ENCODE measurements at regions of chr2 and their contacts with region 1.

Region 1: DNA sequence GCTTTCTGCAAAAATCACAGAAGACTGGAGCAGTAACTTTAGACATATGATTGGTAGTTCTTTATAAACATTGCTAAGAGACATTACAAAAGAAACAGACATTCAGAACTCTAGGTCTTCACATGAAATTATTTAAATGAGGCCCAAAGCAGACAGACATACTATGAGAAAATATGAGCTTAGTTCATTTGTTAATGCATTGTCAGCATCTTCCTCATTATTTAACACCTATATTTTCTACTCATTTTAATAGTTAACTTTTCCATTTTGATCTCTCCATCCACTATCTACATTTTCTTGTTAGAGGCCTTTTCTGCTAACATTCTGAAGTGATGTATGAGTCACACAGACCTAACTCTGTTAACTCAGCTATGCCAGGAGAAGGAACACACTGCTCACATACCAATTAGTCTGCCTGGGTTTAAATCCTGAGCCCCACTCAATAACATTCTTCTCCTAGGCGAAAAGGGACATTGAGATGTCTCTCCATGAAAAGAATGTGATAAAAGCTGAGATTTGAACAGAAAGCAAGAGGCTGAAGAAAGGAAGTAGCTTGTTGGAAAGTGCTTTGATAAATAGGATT is 400.3 kb upstream of the PKDCC start:
- DNase-seq: no peak

Region 2: DNA sequence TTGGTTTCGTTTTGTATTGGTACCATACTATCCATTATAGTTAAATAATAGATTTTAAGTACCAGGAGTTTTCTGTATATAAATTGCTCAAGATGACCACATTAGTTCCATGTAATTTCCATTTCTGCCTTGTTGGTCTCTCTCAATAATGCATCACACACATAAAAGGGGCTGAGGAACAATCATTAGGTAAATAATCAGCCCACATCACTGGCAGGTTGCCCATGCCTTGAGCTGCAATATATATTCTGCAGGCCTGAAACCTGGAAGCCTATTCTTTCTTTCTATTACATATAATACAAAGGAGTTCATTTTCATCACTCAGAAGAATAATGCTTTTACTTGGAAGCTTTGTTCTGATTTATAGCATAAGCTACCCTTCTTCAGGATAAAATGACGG is 215.8 kb before region 1 on chr2:
- intact Hi-C with region 1: loop called in 1 of 2 experiments (anchors 2 kb)
- DNase-seq: no peak

Measured in posterior vena cava (tissue), 2 donors.